CD14-positive monocyte (primary cell): ENCODE measurements at regions of chr6 and their contacts with region 1.

Region 1: GRCh38 chr6:169831450-169832246 is 80.2 kb downstream of the ERMARD start:
- DNase-seq: peak; percentile 29 to 57 (median 42)
- H3K4me3 ChIP-seq: no peak overlapping the region
- H3K4me3 Mint-ChIP-seq: no peak overlapping the region
- H3K27ac ChIP-seq: no peak overlapping the region
- H3K27ac Mint-ChIP-seq: no peak overlapping the region
- H3K4me1 ChIP-seq: peaks cover 0 to 3% of the 10 kb centered on the region in 2 donors
- H3K4me1 Mint-ChIP-seq: peaks cover 1% of the 10 kb centered on the region
- H3K27me3 ChIP-seq: peaks cover 0 to 4% of the 10 kb centered on the region in 2 donors
- H3K27me3 Mint-ChIP-seq: peaks cover 2 to 13% (median 6%) of the 10 kb centered on the region in 3 donors
- CTCF ChIP-seq: peak; percentile 93

Region 2: DNA sequence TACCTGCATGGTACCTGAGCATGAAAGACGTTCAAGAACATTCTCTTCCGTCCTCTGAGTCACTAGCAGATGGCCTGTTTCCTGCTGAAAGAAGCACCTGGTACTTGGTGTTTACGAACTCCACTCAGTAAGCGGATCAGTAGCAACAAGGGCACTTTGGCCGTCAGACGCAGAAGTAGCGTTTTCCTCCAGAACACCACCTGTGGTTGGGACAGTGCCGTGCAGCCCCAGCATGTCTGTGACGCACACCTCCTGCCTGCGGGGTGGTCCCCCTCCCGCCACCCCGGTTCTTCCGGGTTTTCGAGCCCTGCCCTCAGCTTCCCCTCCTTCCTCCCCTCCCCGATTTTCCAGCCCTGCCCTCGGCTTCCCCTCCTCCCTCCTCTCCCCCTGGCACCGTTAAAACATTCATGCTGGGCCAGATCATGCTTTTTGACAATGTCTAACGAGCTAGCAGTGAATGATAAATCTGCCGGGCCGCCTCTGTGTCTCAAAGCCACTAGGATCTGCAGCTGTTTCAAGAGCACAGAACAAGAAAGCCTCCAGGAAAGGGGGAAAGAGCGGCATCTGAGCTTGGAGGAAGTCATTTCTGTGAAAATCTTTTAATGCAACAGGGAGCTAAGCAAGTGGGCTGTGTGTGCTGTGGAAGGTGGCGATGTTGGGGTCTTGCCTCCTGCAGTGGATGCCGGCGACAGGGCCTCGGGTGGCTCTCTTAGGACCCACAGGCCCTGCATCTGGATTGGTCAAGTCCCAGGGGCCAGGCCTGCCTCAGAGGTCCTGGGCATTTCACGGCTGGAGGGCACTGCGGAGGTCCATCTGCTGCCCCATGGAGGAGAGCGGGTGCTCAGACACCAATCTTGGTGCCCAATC is 127.7 kb after region 1 on chr6:
- intact Hi-C with region 1: loop called in 1 of 2 experiments (anchors 10 kb)
- DNase-seq: peak; percentile 30 to 70 (median 51)
- H3K4me3 ChIP-seq: peak overlapping the region in 2 of 3 experiments; percentile 35 to 56
- H3K4me3 Mint-ChIP-seq: peak overlapping the region; percentile 70 to 80
- H3K27ac ChIP-seq: no peak overlapping the region
- H3K27ac Mint-ChIP-seq: peak overlapping the region in 5 of 7 donors; percentile 10 to 82 (median 71)
- H3K4me1 ChIP-seq: peaks cover 42 to 47% of the 10 kb centered on the region in 2 donors
- H3K4me1 Mint-ChIP-seq: peaks cover 56% of the 10 kb centered on the region
- H3K27me3 ChIP-seq: peaks cover 0 to 15% of the 10 kb centered on the region in 2 donors
- H3K27me3 Mint-ChIP-seq: peaks cover 11 to 23% (median 18%) of the 10 kb centered on the region in 3 donors
- CTCF ChIP-seq: no peak

Region 3: GRCh38 chr6:170063851-170064602 is 232.4 kb after region 1 on chr6:
- intact Hi-C with region 1: no loop called
- DNase-seq: no peak
- H3K4me3 ChIP-seq: no peak overlapping the region
- H3K4me3 Mint-ChIP-seq: no peak overlapping the region
- H3K27ac ChIP-seq: no peak overlapping the region
- H3K27ac Mint-ChIP-seq: peak overlapping the region in 1 of 7 donors; percentile 1
- H3K4me1 ChIP-seq: no peaks in the 10 kb centered on the region
- H3K4me1 Mint-ChIP-seq: no peaks in the 10 kb centered on the region
- H3K27me3 ChIP-seq: no peaks in the 10 kb centered on the region
- H3K27me3 Mint-ChIP-seq: peaks cover 0 to 5% (median 5%) of the 10 kb centered on the region in 3 donors
- CTCF ChIP-seq: no peak